Testis (tissue), 5 donors: ENCODE measurements at regions of chr2 and their contacts with region 1.

Region 1: GRCh38 chr2:48107326-48107925 is 201.1 kb upstream of the FBXO11 start:
- DNase-seq: no peak
- H3K4me3 ChIP-seq: peak overlapping the region in 1 of 2 donors; percentile 27
- H3K27ac ChIP-seq: no peak overlapping the region
- H3K4me1 ChIP-seq: peaks cover 4% of the 10 kb centered on the region
- H3K27me3 ChIP-seq: no peaks in the 10 kb centered on the region
- CTCF ChIP-seq: no peak
- POLR2A ChIP-seq: no peak

Region 2: DNA sequence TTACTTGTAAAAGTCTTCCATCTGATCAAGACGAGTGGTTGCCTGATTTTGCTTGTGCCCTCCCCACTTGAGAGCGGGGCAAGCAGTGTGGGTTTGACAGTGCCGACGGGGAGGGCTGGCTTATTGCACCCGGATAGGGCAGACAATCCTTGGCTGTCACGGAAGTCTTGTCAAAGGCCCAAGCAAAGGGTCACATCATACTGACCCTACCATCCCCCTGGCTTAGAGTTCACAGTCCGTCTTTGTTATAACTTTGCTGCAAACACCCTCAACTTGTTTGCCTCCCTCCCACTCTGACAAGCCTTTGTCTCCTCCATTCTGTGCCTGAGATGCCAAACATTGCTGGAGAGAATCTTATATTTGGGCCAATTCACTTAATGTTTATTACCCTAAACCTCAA is 490.4 kb before region 1 on chr2:
- intact Hi-C with region 1: no loop called
- DNase-seq: no peak
- H3K4me3 ChIP-seq: no peak overlapping the region
- H3K27ac ChIP-seq: no peak overlapping the region
- H3K4me1 ChIP-seq: no peaks in the 10 kb centered on the region
- H3K27me3 ChIP-seq: no peaks in the 10 kb centered on the region
- CTCF ChIP-seq: no peak
- POLR2A ChIP-seq: no peak

Region 3: DNA sequence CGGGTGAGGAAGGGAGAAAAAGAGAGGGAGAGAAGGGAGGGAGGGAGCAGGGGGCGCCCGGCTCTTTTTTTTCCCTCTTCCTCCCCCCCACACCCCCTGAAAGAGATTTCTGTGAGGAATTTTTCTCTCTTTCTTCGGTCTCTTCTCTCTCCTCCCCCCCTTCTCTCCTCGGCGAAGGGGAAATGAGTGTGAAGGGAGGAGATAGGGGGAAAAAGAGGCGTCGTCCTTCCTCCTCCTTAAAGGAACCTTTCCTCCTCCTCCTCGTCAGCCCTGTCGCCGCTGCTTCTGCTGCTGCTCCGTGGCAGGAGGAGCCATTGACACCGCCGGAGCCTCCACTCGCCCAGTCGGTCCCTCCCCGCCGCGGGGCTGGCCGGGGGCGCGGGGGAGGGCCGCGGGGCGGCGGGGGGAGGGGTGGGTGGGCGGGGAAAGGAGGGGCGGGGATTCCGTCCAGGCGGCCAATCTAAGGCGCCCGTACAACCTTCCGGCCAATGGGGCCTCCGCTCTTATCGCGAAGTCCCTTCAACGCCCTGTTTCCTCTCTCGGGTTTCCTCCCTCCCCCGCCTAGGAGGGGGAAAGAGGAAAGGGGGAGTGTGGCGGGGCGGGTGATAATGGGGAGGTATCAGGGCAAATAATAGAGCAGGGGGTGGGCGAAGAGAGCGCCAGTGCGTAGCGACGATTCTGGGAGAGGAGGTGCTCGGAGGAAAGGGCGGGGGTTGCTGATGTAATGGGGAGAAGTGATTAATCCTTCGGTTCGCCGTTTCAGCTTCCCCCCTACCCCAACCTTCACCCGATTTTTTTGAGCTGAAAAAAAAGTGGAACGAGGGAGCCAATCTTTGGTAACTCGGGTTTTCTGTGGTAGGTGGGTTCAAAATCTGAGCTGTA is 201.0 kb before region 1 on chr2 and contains the start of gene FBXO11:
- intact Hi-C with region 1: loop called (anchors 5 kb)
- DNase-seq: peak; percentile 96
- H3K4me3 ChIP-seq: peak within 1 kb of the TSS; percentile 90 to 96
- H3K27ac ChIP-seq: peak within 1 kb of the TSS; percentile 99 to 100
- H3K4me1 ChIP-seq: peaks cover 10% of the 10 kb centered on the region
- H3K27me3 ChIP-seq: no peaks in the 10 kb centered on the region
- CTCF ChIP-seq: peak in 2 of 3 experiments; percentile 33 to 51
- POLR2A ChIP-seq: peak; percentile 73
- total RNA-seq, gene FBXO11: 96.0 to 101 TPM

Region 4: GRCh38 chr2:48059977-48060376 is 47.4 kb before region 1 on chr2:
- intact Hi-C with region 1: no loop called
- DNase-seq: no peak
- H3K4me3 ChIP-seq: no peak overlapping the region
- H3K27ac ChIP-seq: no peak overlapping the region
- H3K4me1 ChIP-seq: no peaks in the 10 kb centered on the region
- H3K27me3 ChIP-seq: no peaks in the 10 kb centered on the region
- CTCF ChIP-seq: no peak
- POLR2A ChIP-seq: no peak